BJ (cell line): ENCODE measurements at regions of chr3 and their contacts with region 1.

Region 1: GRCh38 chr3:11379233-11379823 is 107.1 kb downstream of the ATG7 start:
- DNase-seq: peak; percentile 15
- H3K4me3 ChIP-seq: no peak overlapping the region
- H3K27me3 ChIP-seq: no peaks in the 10 kb centered on the region
- CTCF ChIP-seq: peak; percentile 49

Region 2: DNA sequence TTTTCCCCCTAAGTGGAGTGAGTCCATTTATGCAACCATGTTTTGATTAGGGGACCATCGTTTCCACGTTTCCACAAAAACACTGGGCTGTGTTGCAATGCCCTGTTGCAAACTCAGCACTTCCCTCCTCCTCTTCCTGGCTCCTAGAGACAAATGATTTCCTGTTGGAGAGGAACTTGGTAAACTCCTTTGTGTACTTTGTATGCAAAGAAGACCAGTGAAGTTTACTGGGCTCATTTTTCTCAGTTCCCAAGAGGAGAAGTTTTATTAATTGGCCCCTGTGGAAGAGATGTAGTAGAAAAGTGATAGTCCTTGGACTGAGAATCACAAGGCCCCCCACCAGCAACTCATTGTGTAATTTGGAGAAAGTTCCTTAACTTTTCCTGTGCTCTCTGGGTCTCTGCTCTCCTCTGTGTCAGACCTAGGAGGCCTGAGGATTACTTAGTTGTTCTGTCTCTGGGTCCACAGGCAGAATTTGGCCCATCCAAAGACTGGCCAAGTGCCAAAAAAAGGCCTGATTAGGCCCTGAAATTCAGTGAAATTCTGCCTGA is 12.1 kb before region 1 on chr3:
- CTCF ChIA-PET with region 1: interaction called, 10 read pairs
- POLR2A ChIA-PET with region 1: no interaction called
- DNase-seq: no peak
- H3K4me3 ChIP-seq: no peak overlapping the region
- H3K27me3 ChIP-seq: no peaks in the 10 kb centered on the region
- CTCF ChIP-seq: no peak

Region 3: DNA sequence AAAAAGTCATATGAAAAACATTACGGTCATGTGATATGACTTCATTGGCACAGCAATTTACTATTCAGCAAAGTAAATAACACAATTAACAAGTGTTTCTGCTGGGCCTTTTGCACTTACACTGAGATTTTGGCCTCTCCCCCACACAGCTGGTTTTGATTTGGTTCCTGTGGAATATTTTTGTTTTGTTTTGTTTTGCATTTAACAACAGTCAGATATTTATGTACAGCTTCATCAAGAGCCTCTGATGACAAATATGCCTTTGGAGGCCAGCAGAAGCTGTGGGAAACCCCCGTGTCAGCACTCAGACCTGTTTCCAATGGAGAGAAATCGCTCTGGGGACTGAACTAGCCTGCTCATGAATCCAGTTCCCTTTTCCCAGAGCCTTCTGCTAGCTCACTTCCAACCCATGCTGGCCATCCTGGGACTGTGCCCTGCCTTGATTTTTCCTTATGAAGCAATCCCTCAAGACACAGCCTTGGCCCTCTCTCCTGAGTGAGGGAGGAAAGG is 54.7 kb after region 1 on chr3:
- CTCF ChIA-PET with region 1: no interaction called
- POLR2A ChIA-PET with region 1: no interaction called
- DNase-seq: peak; percentile 87
- H3K4me3 ChIP-seq: no peak overlapping the region
- H3K27me3 ChIP-seq: no peaks in the 10 kb centered on the region
- CTCF ChIP-seq: no peak

Region 4: DNA sequence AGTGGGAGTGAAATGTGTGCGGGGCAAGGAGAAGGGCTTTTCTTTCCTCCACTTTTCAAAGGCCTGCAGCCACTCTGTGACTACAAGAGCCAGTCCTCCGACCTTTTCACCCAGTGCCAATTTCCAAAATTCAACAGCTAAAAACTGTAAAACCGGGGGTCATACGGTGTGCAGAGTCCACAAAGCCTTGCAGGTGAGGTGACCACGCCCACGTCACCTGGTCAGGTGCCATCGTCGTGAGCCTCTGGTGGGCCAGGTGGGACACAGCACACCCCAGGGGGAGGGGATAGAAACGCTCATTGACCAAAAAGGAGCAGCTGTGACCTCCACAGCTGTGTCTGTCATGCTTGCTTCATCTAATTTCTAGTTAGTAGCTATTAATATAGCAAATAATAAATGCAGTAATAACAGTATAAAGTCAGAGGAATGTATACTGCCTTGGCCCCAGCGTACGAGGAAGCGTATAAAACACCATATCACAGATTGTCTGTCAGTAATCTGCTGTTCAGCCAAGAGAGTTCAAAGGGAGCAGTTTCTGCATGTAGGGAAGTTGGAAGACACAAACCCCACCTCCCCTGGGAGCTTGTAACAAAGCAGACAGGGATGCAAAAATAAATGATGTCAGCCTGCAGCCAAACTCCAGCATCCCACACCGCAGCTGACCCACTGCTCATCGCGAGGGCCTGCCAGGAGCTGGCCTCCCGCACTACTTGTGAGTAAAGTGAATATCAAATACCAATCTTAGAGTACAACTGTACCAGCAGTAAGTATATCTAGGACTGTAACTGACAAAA is 177.7 kb after region 1 on chr3:
- CTCF ChIA-PET with region 1: interaction called, 20 read pairs
- POLR2A ChIA-PET with region 1: no interaction called
- DNase-seq: no peak
- H3K4me3 ChIP-seq: no peak overlapping the region
- H3K27me3 ChIP-seq: no peaks in the 10 kb centered on the region
- CTCF ChIP-seq: no peak

Region 5: GRCh38 chr3:11651900-11652299 is 272.6 kb after region 1 on chr3:
- CTCF ChIA-PET with region 1: interaction called, 81 read pairs
- POLR2A ChIA-PET with region 1: no interaction called
- DNase-seq: no peak
- H3K4me3 ChIP-seq: no peak overlapping the region
- H3K27me3 ChIP-seq: no peaks in the 10 kb centered on the region
- CTCF ChIP-seq: peak; percentile 34; the same call in 1 of the 2 replicates

Region 6: GRCh38 chr3:11803977-11804892 is 424.9 kb after region 1 on chr3:
- CTCF ChIA-PET with region 1: interaction called, 23 read pairs
- POLR2A ChIA-PET with region 1: no interaction called
- DNase-seq: no peak
- H3K4me3 ChIP-seq: no peak overlapping the region
- H3K27me3 ChIP-seq: no peaks in the 10 kb centered on the region
- CTCF ChIP-seq: peak; percentile 77

Region 7: GRCh38 chr3:11835028-11835639 is 455.8 kb after region 1 on chr3:
- CTCF ChIA-PET with region 1: interaction called, 26 read pairs
- POLR2A ChIA-PET with region 1: no interaction called
- DNase-seq: no peak
- H3K4me3 ChIP-seq: no peak overlapping the region
- H3K27me3 ChIP-seq: no peaks in the 10 kb centered on the region
- CTCF ChIP-seq: peak; percentile 49